ENCODE measurements at regions of chr1 and their contacts with region 1.

Region 1: GRCh38 chr1:81834921-81835698 is 34.4 kb downstream of the ADGRL2 start:
- DNase-seq: no peak
- ATAC-seq: peak; percentile 63
- H3K4me3 ChIP-seq: no peak overlapping the region
- H3K27ac ChIP-seq: no peak overlapping the region
- H3K4me1 ChIP-seq: no peaks in the 10 kb centered on the region
- H3K27me3 ChIP-seq: no peaks in the 10 kb centered on the region
- CTCF ChIP-seq: no peak
- EP300 ChIP-seq: no peak
- POLR2A ChIP-seq: no peak
- RAD21 ChIP-seq: no peak

Region 2: GRCh38 chr1:81820765-81821164 is 14.3 kb before region 1 on chr1:
- CTCF ChIA-PET with region 1: interaction called, 5 read pairs
- POLR2A ChIA-PET with region 1: no interaction called
- RAD21 ChIA-PET with region 1: interaction called, 3 read pairs
- SMC1A ChIA-PET with region 1: interaction called, 14 read pairs
- in situ Hi-C with region 1: no loop called
- intact Hi-C with region 1: no loop called
- DNase-seq: no peak
- ATAC-seq: peak; percentile 32; the same call in 2 of the 3 replicates
- H3K4me3 ChIP-seq: no peak overlapping the region
- H3K27ac ChIP-seq: no peak overlapping the region
- H3K4me1 ChIP-seq: no peaks in the 10 kb centered on the region
- H3K27me3 ChIP-seq: no peaks in the 10 kb centered on the region; a peak in 1 of 4 replicates
- CTCF ChIP-seq: no peak
- EP300 ChIP-seq: no peak
- POLR2A ChIP-seq: no peak
- RAD21 ChIP-seq: no peak

Region 3: DNA sequence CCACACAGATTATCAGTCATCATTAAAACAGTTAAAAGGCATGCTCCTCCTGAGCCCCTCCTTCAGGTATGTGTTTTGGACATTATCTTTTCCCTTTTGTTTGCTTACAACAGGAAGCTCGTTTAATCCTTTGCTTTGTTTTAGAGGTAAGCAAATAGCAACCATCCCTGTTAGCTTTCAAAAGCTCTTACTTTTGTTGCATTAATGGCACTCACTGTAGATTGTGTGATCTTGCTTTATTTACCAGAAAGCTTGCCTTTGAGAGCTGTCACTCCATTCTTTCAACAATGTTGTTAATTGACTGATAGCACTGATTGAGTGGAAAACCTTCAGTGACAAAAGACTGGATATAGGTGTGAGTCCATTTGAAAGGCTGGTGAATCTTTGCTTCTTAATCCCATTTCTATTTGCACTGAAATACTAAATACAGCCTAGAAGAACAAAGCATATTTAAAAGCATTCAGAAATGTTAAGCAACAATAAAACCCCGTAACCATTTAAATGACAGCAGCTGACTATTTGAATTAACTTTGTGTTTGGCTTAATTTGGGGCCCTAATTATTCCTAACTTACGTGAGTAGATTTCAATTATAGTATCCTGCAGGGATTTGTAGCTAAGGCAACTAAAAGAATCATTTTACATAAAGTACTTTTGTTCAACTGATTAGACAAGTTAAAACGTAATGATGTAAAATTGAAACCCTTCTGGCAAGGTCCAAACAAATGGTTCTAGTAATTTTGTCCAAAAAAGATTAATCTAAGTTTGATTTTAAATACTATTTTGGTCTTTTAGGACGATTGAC is 14.0 kb after region 1 on chr1:
- CTCF ChIA-PET with region 1: interaction called, 4 read pairs
- POLR2A ChIA-PET with region 1: no interaction called
- RAD21 ChIA-PET with region 1: interaction called, 11 read pairs
- SMC1A ChIA-PET with region 1: interaction called, 12 read pairs
- in situ Hi-C with region 1: no loop called
- intact Hi-C with region 1: no loop called
- DNase-seq: no peak
- ATAC-seq: no peak
- H3K4me3 ChIP-seq: no peak overlapping the region
- H3K27ac ChIP-seq: no peak overlapping the region
- H3K4me1 ChIP-seq: no peaks in the 10 kb centered on the region
- H3K27me3 ChIP-seq: no peaks in the 10 kb centered on the region
- CTCF ChIP-seq: no peak
- EP300 ChIP-seq: no peak
- POLR2A ChIP-seq: no peak
- RAD21 ChIP-seq: no peak

Region 4: GRCh38 chr1:81894867-81895266 is 59.8 kb after region 1 on chr1:
- CTCF ChIA-PET with region 1: no interaction called
- POLR2A ChIA-PET with region 1: no interaction called
- RAD21 ChIA-PET with region 1: no interaction called
- SMC1A ChIA-PET with region 1: no interaction called
- in situ Hi-C with region 1: no loop called
- intact Hi-C with region 1: no loop called
- DNase-seq: no peak
- ATAC-seq: peak; percentile 88
- H3K4me3 ChIP-seq: no peak overlapping the region
- H3K27ac ChIP-seq: no peak overlapping the region
- H3K4me1 ChIP-seq: no peaks in the 10 kb centered on the region
- H3K27me3 ChIP-seq: no peaks in the 10 kb centered on the region
- CTCF ChIP-seq: no peak
- EP300 ChIP-seq: no peak
- POLR2A ChIP-seq: no peak
- RAD21 ChIP-seq: no peak

Region 5: GRCh38 chr1:82110855-82111254 is 275.7 kb after region 1 on chr1:
- CTCF ChIA-PET with region 1: no interaction called
- POLR2A ChIA-PET with region 1: no interaction called
- RAD21 ChIA-PET with region 1: no interaction called
- SMC1A ChIA-PET with region 1: no interaction called
- in situ Hi-C with region 1: no loop called
- intact Hi-C with region 1: no loop called
- DNase-seq: no peak
- ATAC-seq: no peak
- H3K4me3 ChIP-seq: no peak overlapping the region
- H3K27ac ChIP-seq: no peak overlapping the region
- H3K4me1 ChIP-seq: no peaks in the 10 kb centered on the region
- H3K27me3 ChIP-seq: no peaks in the 10 kb centered on the region
- CTCF ChIP-seq: no peak
- EP300 ChIP-seq: no peak
- POLR2A ChIP-seq: no peak
- RAD21 ChIP-seq: no peak

Measured in GM12878 (cell line).